CD4-positive, alpha-beta T cell (primary cell): ENCODE measurements at regions of chr6 and their contacts with region 1.

Region 1: GRCh38 chr6:133952815-133953633 is at the start of gene TBPL1:
- DNase-seq: peak; percentile 77 to 96 (median 88)
- ATAC-seq: peak; percentile 83
- H3K4me3 ChIP-seq: peak within 1 kb of the TSS; percentile 83
- H3K4me3 Mint-ChIP-seq: peak within 1 kb of the TSS; percentile 97
- H3K27ac ChIP-seq: peak within 1 kb of the TSS; percentile 68 to 71
- H3K27ac Mint-ChIP-seq: peak within 1 kb of the TSS; percentile 91
- H3K4me1 ChIP-seq: peaks cover 14% of the 10 kb centered on the region
- H3K4me1 Mint-ChIP-seq: peaks cover 48% of the 10 kb centered on the region
- H3K27me3 ChIP-seq: no peaks in the 10 kb centered on the region
- H3K27me3 Mint-ChIP-seq: no peaks in the 10 kb centered on the region
- CTCF ChIP-seq: no peak
- total RNA-seq, gene TBPL1: 34.7 to 37.3 TPM

Region 2: GRCh38 chr6:132512638-132513632 is 1440.1 kb before region 1 on chr6 and contains the start of gene STX7:
- CTCF ChIA-PET with region 1: no interaction called
- POLR2A ChIA-PET with region 1: no interaction called
- intact Hi-C with region 1: loop called in 1 of 2 experiments (anchors 10 kb)
- DNase-seq: peak; percentile 70 to 92 (median 82)
- ATAC-seq: peak; percentile 93
- H3K4me3 ChIP-seq: peak within 1 kb of the TSS; percentile 76
- H3K4me3 Mint-ChIP-seq: peak within 1 kb of the TSS; percentile 99
- H3K27ac ChIP-seq: peak within 1 kb of the TSS in 1 of 2 donors; percentile 39
- H3K27ac Mint-ChIP-seq: peak within 1 kb of the TSS; percentile 86
- H3K4me1 ChIP-seq: peaks cover 3% of the 10 kb centered on the region
- H3K4me1 Mint-ChIP-seq: peaks cover 42% of the 10 kb centered on the region
- H3K27me3 ChIP-seq: no peaks in the 10 kb centered on the region
- H3K27me3 Mint-ChIP-seq: peaks cover 2% of the 10 kb centered on the region
- CTCF ChIP-seq: no peak
- total RNA-seq, gene STX7: 4.3 to 5.9 TPM

Region 3: GRCh38 chr6:133584823-133585222 is 368.2 kb before region 1 on chr6:
- CTCF ChIA-PET with region 1: no interaction called
- POLR2A ChIA-PET with region 1: no interaction called
- intact Hi-C with region 1: no loop called
- DNase-seq: no peak
- ATAC-seq: no peak
- H3K4me3 ChIP-seq: no peak overlapping the region
- H3K4me3 Mint-ChIP-seq: no peak overlapping the region
- H3K27ac ChIP-seq: no peak overlapping the region
- H3K27ac Mint-ChIP-seq: no peak overlapping the region
- H3K4me1 ChIP-seq: no peaks in the 10 kb centered on the region
- H3K4me1 Mint-ChIP-seq: no peaks in the 10 kb centered on the region
- H3K27me3 ChIP-seq: no peaks in the 10 kb centered on the region
- H3K27me3 Mint-ChIP-seq: peaks cover under 1% of the 10 kb centered on the region
- CTCF ChIP-seq: no peak

Region 4: DNA sequence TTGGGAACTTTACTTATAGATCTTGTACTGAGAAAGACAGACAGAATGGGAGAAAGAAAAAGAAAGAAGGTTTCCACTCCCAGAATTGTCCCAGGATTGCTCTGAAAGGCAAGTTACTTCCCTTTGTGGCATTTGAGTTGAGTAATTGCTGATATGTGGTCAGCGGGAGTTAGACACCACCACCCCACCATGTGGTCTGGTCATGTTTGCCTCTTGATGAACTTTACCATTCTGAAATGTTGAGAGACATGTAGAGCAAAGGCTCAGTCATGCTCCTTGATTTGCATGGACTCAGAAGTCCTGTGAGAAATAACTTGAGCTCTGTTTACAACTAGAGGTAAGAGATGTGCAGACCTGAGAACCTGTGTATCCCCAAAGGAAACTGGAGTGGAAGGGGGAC is 47.0 kb before region 1 on chr6:
- CTCF ChIA-PET with region 1: no interaction called
- POLR2A ChIA-PET with region 1: no interaction called
- intact Hi-C with region 1: no loop called
- DNase-seq: no peak
- ATAC-seq: no peak
- H3K4me3 ChIP-seq: no peak overlapping the region
- H3K4me3 Mint-ChIP-seq: no peak overlapping the region
- H3K27ac ChIP-seq: no peak overlapping the region
- H3K27ac Mint-ChIP-seq: no peak overlapping the region
- H3K4me1 ChIP-seq: no peaks in the 10 kb centered on the region
- H3K4me1 Mint-ChIP-seq: no peaks in the 10 kb centered on the region
- H3K27me3 ChIP-seq: peaks cover 36 to 69% of the 10 kb centered on the region in 2 experiments
- H3K27me3 Mint-ChIP-seq: peaks cover 82% of the 10 kb centered on the region
- CTCF ChIP-seq: no peak

Region 5: DNA sequence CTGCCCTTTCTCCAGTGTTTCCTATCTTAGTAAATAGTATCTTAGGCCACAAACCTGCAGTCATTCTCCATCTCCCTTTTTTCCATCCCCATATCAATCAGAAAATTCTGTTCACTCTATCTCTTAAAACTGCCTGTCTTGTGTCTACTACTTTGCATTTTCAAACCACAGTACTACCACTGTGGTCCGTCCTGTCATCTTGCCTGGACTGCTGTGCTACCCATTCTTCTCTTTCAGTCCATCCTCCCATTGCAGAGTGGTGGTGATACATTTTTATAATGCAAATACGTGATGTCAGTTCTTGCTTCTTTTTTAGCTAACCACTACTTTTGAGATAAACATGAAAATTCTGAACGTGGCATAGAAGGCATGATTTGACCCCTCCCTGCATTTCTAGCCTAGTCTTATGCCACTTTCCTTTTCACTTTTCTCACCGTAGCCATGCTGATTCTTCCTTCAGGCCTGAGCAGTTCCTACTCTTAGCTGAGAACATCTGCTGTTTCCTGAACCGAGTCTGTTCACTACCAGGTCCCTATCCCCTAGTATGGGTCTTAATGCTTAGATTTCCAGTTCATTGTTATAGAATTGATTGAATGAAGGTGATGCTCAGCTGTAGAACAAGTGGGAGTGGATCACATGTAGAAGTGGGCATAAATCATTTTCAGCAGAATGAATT is 13.8 kb after region 1 on chr6:
- CTCF ChIA-PET with region 1: interaction called, 5 read pairs
- POLR2A ChIA-PET with region 1: interaction called, 14 read pairs
- intact Hi-C with region 1: loop called in 1 of 2 experiments (anchors 2 kb)
- DNase-seq: no peak
- ATAC-seq: no peak
- H3K4me3 ChIP-seq: no peak overlapping the region
- H3K4me3 Mint-ChIP-seq: no peak overlapping the region
- H3K27ac ChIP-seq: no peak overlapping the region
- H3K27ac Mint-ChIP-seq: peak overlapping the region; percentile 1
- H3K4me1 ChIP-seq: peaks cover 4% of the 10 kb centered on the region
- H3K4me1 Mint-ChIP-seq: peaks cover 81% of the 10 kb centered on the region
- H3K27me3 ChIP-seq: no peaks in the 10 kb centered on the region
- H3K27me3 Mint-ChIP-seq: no peaks in the 10 kb centered on the region
- CTCF ChIP-seq: no peak

Region 6: GRCh38 chr6:133973109-133973971 is 20.3 kb after region 1 on chr6:
- CTCF ChIA-PET with region 1: interaction called, 9 read pairs
- POLR2A ChIA-PET with region 1: interaction called, 10 read pairs
- intact Hi-C with region 1: loop called (anchors 2 kb)
- DNase-seq: peak in 3 of 14 experiments; percentile 54 to 74 (median 69)
- ATAC-seq: peak; percentile 84
- H3K4me3 ChIP-seq: no peak overlapping the region
- H3K4me3 Mint-ChIP-seq: no peak overlapping the region
- H3K27ac ChIP-seq: no peak overlapping the region
- H3K27ac Mint-ChIP-seq: peak overlapping the region; percentile 16
- H3K4me1 ChIP-seq: peaks cover 9% of the 10 kb centered on the region
- H3K4me1 Mint-ChIP-seq: peaks cover 58% of the 10 kb centered on the region
- H3K27me3 ChIP-seq: no peaks in the 10 kb centered on the region
- H3K27me3 Mint-ChIP-seq: no peaks in the 10 kb centered on the region
- CTCF ChIP-seq: peak; percentile 92

Region 7: DNA sequence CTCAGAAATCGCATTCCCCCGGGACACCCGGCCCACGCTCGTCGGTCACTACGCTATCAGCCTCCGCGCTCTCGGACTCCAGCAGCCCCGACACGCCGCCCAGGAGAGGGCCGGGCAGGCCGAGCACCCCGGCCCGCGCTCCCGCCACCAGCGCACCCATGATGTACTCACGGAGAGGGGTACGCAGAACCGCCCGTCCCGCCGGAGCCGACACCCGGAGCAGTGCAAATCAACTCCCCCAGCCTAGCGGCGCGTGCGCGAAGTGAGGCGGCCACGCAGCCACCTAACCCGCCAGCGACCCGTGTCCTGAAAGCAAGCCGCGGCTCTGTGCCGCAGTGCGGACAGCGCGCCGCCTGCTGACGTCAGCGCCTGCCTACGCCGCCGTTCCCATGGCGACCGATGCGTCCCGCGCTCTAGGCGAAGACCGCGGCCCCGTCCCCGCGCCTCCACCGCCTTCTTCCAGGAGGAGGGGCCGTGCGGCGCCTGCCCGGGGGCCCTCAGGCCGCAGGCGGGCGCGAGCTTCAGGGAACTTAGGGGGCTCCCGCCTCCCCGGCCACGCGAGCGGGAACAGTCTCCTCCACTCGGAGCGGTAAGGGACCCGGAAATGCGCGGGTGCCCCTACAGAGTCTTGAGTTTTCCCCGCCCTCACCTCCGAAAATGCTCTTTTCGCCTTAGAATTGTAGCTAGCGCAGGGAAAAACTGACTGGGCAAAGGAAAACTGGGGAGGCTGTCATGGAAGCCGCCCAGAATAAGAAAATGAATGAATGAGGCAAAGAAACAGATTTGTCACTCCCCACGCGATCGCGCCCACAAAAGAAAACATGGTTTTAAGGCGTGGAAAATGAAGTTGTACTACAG is 1544.6 kb after region 1 on chr6 and contains the start of gene AHI1:
- CTCF ChIA-PET with region 1: no interaction called
- POLR2A ChIA-PET with region 1: no interaction called
- intact Hi-C with region 1: loop called in 1 of 2 experiments (anchors 10 kb)
- DNase-seq: peak; percentile 72 to 96 (median 86)
- ATAC-seq: peak; percentile 71
- H3K4me3 ChIP-seq: peak within 1 kb of the TSS; percentile 92
- H3K4me3 Mint-ChIP-seq: no peak within 1 kb of the TSS
- H3K27ac ChIP-seq: peak within 1 kb of the TSS; percentile 79 to 88
- H3K27ac Mint-ChIP-seq: no peak within 1 kb of the TSS
- H3K4me1 ChIP-seq: peaks cover 9% of the 10 kb centered on the region
- H3K4me1 Mint-ChIP-seq: peaks cover 12% of the 10 kb centered on the region
- H3K27me3 ChIP-seq: no peaks in the 10 kb centered on the region
- H3K27me3 Mint-ChIP-seq: no peaks in the 10 kb centered on the region
- CTCF ChIP-seq: no peak
- total RNA-seq, gene AHI1: 21.1 to 27.5 TPM